Activated T-helper 1 cell treated with anti-CD3 and anti-CD28 coated beads, Interleukin-12 subunit alpha, Interleukin-12 subunit beta, Interleukin-2, Interleukin-4 antibody, amounts not matched to agents 30 ng/mL and 10 ng/mL and 1 ng/mL, durations not matched to agents 14 hours and 24 hours and 36 hours (primary cell): ENCODE measurements at regions of chr1 and their contacts with region 1.

Region 1: DNA sequence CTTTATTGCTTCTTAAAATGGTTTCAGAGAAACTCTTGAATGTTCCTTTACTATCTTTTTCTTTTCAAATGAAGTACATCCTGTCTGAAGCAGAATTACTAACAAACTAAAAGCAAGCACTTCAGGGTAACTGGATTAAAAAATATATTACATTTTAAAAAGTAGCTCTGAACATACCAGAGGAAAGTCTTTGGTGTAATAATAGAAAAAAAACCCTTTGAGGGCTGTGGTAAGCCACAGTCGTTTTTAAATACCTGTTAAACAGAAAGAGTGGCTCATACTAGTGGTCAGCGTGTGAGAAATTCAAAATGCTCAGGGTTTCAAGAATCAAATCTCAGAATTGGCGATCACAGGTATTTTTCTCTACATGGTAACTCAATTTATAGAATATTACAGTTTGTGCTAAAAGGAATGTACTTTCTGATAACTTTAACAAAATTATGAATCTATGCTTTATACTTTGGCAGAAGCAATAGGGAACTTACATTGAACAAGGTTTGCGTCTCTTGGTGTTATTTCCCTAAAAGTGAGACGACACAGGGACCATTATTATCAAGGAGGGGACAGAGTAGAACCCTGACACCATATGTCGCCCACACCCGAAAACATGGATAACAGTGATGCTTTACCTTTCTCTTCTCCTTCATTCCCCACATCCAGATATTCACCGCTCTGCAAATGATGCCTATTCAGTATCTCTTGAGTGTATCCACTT is 97.0 kb upstream of the DPH5 start:
- DNase-seq: no peak
- H3K4me3 Mint-ChIP-seq: peak overlapping the region; percentile 23
- H3K27ac Mint-ChIP-seq: peak overlapping the region; percentile 11
- H3K4me1 Mint-ChIP-seq: peaks cover 39% of the 10 kb centered on the region
- H3K27me3 Mint-ChIP-seq: peaks cover 4% of the 10 kb centered on the region

Region 2: DNA sequence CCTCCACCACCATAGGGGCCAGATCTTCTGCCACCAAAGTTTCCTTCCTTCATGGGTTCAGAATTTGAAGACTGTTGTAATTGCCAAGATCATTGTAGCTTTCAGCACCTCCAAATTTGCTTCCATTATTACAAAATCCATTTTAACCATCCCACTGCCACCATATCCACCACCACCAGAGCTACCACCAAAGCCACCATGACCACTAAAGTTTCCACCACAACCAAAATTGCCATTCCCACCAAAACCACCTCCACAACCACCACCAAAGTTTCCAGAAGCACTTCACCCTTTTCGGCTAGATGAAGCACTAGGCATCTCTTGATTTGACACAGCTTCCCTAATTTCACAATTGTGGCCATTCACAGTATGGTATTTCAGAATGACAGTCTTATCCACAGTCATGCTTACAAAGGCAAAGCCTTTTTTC is 181.5 kb before region 1 on chr1:
- intact Hi-C with region 1: loop called (anchors 5 kb)
- DNase-seq: peak; percentile 17
- H3K4me3 Mint-ChIP-seq: peak overlapping the region; percentile 58
- H3K27ac Mint-ChIP-seq: peak overlapping the region; percentile 99
- H3K4me1 Mint-ChIP-seq: peaks cover 37% of the 10 kb centered on the region
- H3K27me3 Mint-ChIP-seq: peaks cover 3% of the 10 kb centered on the region

Region 3: DNA sequence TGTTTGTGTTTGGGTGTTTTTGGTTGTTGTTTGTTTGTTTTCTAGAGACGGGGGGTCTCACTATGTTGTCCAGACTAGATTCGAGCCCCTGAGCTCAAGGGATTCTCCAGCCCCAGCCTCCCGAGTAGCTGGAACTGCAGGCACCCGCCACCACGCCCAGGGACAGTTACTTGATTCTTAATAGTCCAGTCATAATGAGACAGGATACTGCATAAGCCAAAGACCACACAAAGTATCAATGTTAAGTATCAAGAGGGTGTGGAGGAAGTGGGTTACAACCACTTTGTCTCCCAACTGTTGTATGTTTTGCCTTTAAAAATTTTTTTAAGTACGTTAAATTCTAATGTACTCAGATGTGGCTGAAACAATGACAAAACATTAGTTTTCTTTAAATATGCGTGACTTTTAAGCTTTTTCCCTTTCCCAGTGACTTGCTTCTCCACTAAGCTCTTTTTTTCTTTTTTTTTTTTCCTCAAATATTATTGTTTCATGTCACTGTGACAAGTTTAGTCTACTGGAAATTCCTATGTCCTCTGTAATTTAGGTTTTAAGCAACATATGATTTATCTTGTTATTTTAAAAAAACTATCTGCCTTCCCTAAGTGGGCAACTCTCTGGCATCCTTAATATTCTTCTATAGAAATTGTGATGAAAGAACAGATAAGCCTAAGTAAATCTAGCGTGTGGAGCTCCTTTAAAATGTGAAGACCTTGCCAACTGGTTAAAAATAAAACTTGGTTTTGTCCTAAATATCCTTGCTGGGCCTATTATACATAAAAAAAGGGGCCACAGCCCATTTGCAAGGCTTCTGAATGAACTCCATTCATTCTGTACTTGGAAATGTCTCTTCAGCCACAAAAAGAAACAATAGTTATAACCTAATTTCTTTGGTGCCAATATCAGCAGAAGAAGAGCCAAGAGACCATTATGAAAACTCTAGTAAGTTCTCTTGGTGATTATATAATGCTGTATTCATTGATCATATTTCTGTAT is 40.8 kb before region 1 on chr1:
- intact Hi-C with region 1: loop called (anchors 5 kb)
- DNase-seq: peak; percentile 58
- H3K4me3 Mint-ChIP-seq: peak overlapping the region; percentile 38
- H3K27ac Mint-ChIP-seq: peak overlapping the region; percentile 61
- H3K4me1 Mint-ChIP-seq: peaks cover 57% of the 10 kb centered on the region
- H3K27me3 Mint-ChIP-seq: no peaks in the 10 kb centered on the region

Region 4: DNA sequence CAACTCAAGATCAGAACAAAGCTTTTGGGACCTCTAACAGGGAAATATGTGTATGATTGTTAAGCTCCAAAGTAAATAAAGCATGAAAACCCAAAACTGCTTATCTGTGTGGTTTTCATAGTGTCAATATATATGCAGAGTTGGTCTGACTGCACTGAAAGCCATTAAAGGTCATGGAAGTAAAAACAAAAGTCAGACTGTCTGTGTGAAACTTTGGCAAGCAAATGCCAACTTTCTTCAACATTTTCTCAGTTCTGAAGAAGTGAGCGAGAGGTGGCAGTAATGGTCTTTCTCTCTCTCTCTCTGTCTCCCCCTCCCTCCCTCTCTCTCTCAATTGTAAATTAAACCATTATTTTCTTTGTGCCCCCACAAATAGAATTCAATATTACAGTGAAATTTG is 14.1 kb after region 1 on chr1:
- intact Hi-C with region 1: loop called (anchors 1 kb)
- DNase-seq: peak; percentile 26
- H3K4me3 Mint-ChIP-seq: peak overlapping the region; percentile 30
- H3K27ac Mint-ChIP-seq: peak overlapping the region; percentile 38
- H3K4me1 Mint-ChIP-seq: peaks cover 63% of the 10 kb centered on the region
- H3K27me3 Mint-ChIP-seq: no peaks in the 10 kb centered on the region

Region 5: GRCh38 chr1:101357444-101357986 is 234.9 kb after region 1 on chr1:
- intact Hi-C with region 1: loop called (anchors 5 kb)
- DNase-seq: peak; percentile 69
- H3K4me3 Mint-ChIP-seq: no peak overlapping the region
- H3K27ac Mint-ChIP-seq: no peak overlapping the region
- H3K4me1 Mint-ChIP-seq: peaks cover 9% of the 10 kb centered on the region
- H3K27me3 Mint-ChIP-seq: peaks cover 23% of the 10 kb centered on the region